OCI-LY7 (cell line): ENCODE measurements at regions of chr4 and their contacts with region 1.

Region 1: DNA sequence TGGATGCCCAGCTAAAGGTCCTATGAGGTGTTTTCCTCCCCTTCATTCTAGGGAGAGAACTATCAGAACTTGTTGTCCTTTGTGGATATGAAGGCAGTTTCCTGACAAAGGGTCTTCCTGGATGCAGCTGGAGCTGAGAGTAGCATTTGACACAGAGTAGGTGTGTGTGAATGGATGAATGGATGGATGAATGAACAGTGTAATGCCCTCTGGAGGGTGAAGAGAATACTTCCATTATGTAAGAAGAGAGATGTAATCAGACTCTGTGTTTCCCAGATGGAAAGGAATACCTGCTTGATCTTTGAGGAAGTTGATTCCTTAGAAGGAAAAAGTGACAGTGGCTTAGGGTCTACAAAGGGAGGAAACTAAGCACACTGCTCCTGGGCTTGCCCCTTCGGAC is 55.4 kb upstream of the AADAT start:
- DNase-seq: no peak
- H3K4me3 ChIP-seq: no peak overlapping the region
- H3K27ac ChIP-seq: no peak overlapping the region
- H3K4me1 ChIP-seq: no peaks in the 10 kb centered on the region
- CTCF ChIP-seq: no peak

Region 2: GRCh38 chr4:168880811-168881595 is 1264.1 kb before region 1 on chr4:
- CTCF ChIA-PET with region 1: no interaction called
- POLR2A ChIA-PET with region 1: no interaction called
- intact Hi-C with region 1: loop called (anchors 5 kb)
- DNase-seq: no peak
- H3K4me3 ChIP-seq: no peak overlapping the region
- H3K27ac ChIP-seq: no peak overlapping the region
- H3K4me1 ChIP-seq: no peaks in the 10 kb centered on the region
- CTCF ChIP-seq: no peak

Region 3: GRCh38 chr4:169582205-169582604 is 562.9 kb before region 1 on chr4:
- CTCF ChIA-PET with region 1: no interaction called
- POLR2A ChIA-PET with region 1: no interaction called
- intact Hi-C with region 1: no loop called
- DNase-seq: no peak
- H3K4me3 ChIP-seq: no peak overlapping the region
- H3K27ac ChIP-seq: no peak overlapping the region
- H3K4me1 ChIP-seq: no peaks in the 10 kb centered on the region
- CTCF ChIP-seq: no peak